B cell (primary cell): ENCODE measurements at regions of chr16 and their contacts with region 1.

Region 1: DNA sequence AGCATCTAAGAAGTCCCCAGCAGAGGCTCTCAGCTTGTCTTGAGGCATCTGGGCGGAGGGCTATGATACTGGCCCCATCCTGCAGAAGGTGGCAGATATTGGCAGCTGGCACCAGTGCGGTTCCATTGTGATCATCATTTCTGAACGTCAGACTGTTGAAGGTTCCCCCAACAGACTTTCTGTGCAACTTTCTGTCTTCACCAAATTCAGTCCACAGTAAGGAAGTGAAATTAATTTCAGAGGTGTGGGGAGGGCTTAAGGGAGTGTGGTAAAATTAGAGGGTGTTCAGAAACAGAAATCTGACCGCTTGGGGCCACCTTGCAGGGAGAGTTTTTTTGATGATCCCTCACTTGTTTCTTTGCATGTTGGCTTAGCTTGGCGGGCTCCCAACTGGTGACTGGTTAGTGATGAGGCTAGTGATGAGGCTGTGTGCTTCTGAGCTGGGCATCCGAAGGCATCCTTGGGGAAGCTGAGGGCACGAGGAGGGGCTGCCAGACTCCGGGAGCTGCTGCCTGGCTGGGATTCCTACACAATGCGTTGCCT is at the start of gene CIITA:
- DNase-seq: peak; percentile 93
- ATAC-seq: peak; percentile 70
- H3K4me3 ChIP-seq: peak within 1 kb of the TSS; percentile 77 to 97 (median 91)
- H3K4me3 Mint-ChIP-seq: peak within 1 kb of the TSS; percentile 100
- H3K27ac ChIP-seq: peak within 1 kb of the TSS; percentile 86 to 88
- H3K27ac Mint-ChIP-seq: peak within 1 kb of the TSS; percentile 92
- H3K4me1 ChIP-seq: peaks cover 57 to 73% of the 10 kb centered on the region in 2 donors
- H3K4me1 Mint-ChIP-seq: peaks cover 61% of the 10 kb centered on the region
- H3K27me3 ChIP-seq: no peaks in the 10 kb centered on the region
- H3K27me3 Mint-ChIP-seq: no peaks in the 10 kb centered on the region
- CTCF ChIP-seq: no peak
- total RNA-seq, gene CIITA: 719 and 738 TPM in 2 replicates

Region 2: GRCh38 chr16:10521681-10522274 is 355.1 kb before region 1 on chr16:
- CTCF ChIA-PET with region 1: no interaction called
- POLR2A ChIA-PET with region 1: interaction called, 11 read pairs
- intact Hi-C with region 1: no loop called
- DNase-seq: peak; percentile 72
- ATAC-seq: peak; percentile 80
- H3K4me3 ChIP-seq: no peak overlapping the region
- H3K4me3 Mint-ChIP-seq: no peak overlapping the region
- H3K27ac ChIP-seq: no peak overlapping the region
- H3K27ac Mint-ChIP-seq: no peak overlapping the region
- H3K4me1 ChIP-seq: peaks cover 0 to 3% of the 10 kb centered on the region in 2 donors
- H3K4me1 Mint-ChIP-seq: peaks cover 2% of the 10 kb centered on the region
- H3K27me3 ChIP-seq: no peaks in the 10 kb centered on the region
- H3K27me3 Mint-ChIP-seq: no peaks in the 10 kb centered on the region
- CTCF ChIP-seq: peak; percentile 93

Region 3: GRCh38 chr16:10752843-10753523 is 123.9 kb before region 1 on chr16:
- CTCF ChIA-PET with region 1: interaction called, 12 read pairs
- POLR2A ChIA-PET with region 1: interaction called, 20 read pairs
- intact Hi-C with region 1: no loop called
- DNase-seq: peak; percentile 86
- ATAC-seq: peak; percentile 82
- H3K4me3 ChIP-seq: peak overlapping the region in 1 of 5 experiments; percentile 20
- H3K4me3 Mint-ChIP-seq: peak overlapping the region; percentile 54
- H3K27ac ChIP-seq: peak overlapping the region; percentile 75 to 76
- H3K27ac Mint-ChIP-seq: peak overlapping the region; percentile 73
- H3K4me1 ChIP-seq: peaks cover 19 to 41% of the 10 kb centered on the region in 2 donors
- H3K4me1 Mint-ChIP-seq: peaks cover 52% of the 10 kb centered on the region
- H3K27me3 ChIP-seq: no peaks in the 10 kb centered on the region
- H3K27me3 Mint-ChIP-seq: no peaks in the 10 kb centered on the region
- CTCF ChIP-seq: no peak

Region 4: DNA sequence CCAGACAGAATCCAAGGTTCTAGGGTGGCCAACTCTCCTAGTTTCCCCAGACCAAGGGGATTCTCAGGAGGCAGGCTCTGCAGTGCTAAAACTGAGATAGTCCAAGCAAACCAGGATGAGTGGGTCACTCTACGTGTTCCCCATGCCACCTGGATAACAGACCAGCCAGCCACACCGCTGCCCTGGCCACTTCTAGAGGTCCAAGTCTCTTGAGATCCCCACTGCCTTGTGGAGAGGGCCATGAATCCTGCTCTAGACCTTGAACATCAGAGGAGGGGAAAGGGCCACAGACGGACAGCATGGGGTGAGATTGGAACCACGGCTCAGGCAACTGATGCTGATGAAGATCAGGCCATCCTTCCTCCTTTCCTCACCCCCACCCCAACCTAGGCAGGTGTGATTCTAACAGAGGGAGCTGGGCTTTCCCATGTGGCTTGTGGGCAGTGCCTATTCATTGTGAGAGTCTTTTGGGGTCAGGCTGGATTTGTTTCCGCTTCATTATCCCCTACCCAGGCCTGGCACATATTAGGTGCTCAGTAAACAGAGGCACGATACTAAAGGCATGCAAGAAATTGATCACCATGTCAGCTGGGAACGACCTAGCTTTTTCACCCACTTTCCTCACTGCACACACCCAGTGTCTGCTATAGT is 41.5 kb before region 1 on chr16:
- CTCF ChIA-PET with region 1: no interaction called
- POLR2A ChIA-PET with region 1: no interaction called
- intact Hi-C with region 1: no loop called
- DNase-seq: no peak
- ATAC-seq: no peak
- H3K4me3 ChIP-seq: no peak overlapping the region
- H3K4me3 Mint-ChIP-seq: no peak overlapping the region
- H3K27ac ChIP-seq: no peak overlapping the region
- H3K27ac Mint-ChIP-seq: peak overlapping the region; percentile 46
- H3K4me1 ChIP-seq: peaks cover 28 to 37% of the 10 kb centered on the region in 2 donors
- H3K4me1 Mint-ChIP-seq: peaks cover 47% of the 10 kb centered on the region
- H3K27me3 ChIP-seq: no peaks in the 10 kb centered on the region
- H3K27me3 Mint-ChIP-seq: no peaks in the 10 kb centered on the region
- CTCF ChIP-seq: no peak

Region 5: GRCh38 chr16:10888320-10888937 is 11.6 kb after region 1 on chr16:
- CTCF ChIA-PET with region 1: interaction called, 120 read pairs
- POLR2A ChIA-PET with region 1: interaction called, 122 read pairs
- intact Hi-C with region 1: loop called (anchors 1 kb)
- DNase-seq: peak; percentile 69
- ATAC-seq: peak; percentile 15
- H3K4me3 ChIP-seq: peak overlapping the region; percentile 41 to 76 (median 47)
- H3K4me3 Mint-ChIP-seq: peak overlapping the region; percentile 81
- H3K27ac ChIP-seq: peak overlapping the region; percentile 74 to 85
- H3K27ac Mint-ChIP-seq: peak overlapping the region; percentile 87
- H3K4me1 ChIP-seq: peaks cover 98 to 100% of the 10 kb centered on the region in 2 donors
- H3K4me1 Mint-ChIP-seq: peaks cover 96% of the 10 kb centered on the region
- H3K27me3 ChIP-seq: no peaks in the 10 kb centered on the region
- H3K27me3 Mint-ChIP-seq: no peaks in the 10 kb centered on the region
- CTCF ChIP-seq: no peak

Region 6: DNA sequence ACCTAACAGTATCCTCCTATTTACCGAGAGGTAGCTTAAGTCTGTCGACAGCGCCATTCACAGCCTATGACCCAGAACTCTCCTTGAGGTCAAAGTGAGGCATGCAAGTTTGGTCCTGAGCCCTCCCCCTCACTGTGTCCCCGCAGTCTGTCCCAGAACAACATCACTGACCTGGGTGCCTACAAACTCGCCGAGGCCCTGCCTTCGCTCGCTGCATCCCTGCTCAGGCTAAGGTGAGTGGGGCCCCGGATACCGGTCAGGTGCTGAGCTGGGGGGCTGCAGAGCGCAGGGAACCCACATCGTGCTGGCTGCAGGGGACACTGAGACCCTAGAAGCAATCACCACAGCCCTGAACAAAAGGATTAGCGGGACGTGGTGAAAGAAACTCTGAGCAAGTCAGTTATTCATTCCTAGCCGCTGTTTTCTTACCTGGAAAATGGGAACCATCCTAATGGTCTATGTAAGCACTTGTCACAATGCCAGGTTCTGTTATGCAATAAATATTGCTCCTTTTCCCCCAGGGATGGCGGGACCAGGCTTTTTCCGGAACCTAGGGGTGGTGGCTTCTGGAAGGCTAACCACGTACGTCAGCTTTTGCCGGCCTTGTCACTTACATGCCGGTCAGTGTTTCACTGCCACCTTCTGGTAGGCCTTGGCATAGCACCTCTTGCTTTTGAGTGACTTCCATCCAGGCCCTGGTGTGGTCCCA is 41.6 kb after region 1 on chr16:
- CTCF ChIA-PET with region 1: interaction called, 98 read pairs
- POLR2A ChIA-PET with region 1: interaction called, 59 read pairs
- intact Hi-C with region 1: loop called (anchors 1 kb)
- DNase-seq: peak; percentile 91
- ATAC-seq: peak; percentile 80
- H3K4me3 ChIP-seq: no peak overlapping the region
- H3K4me3 Mint-ChIP-seq: peak overlapping the region; percentile 44
- H3K27ac ChIP-seq: peak overlapping the region; percentile 51 to 95
- H3K27ac Mint-ChIP-seq: peak overlapping the region; percentile 82
- H3K4me1 ChIP-seq: peaks cover 56 to 63% of the 10 kb centered on the region in 2 donors
- H3K4me1 Mint-ChIP-seq: peaks cover 66% of the 10 kb centered on the region
- H3K27me3 ChIP-seq: no peaks in the 10 kb centered on the region
- H3K27me3 Mint-ChIP-seq: no peaks in the 10 kb centered on the region
- CTCF ChIP-seq: peak; percentile 94

Region 7: GRCh38 chr16:11016993-11017392 is 140.1 kb after region 1 on chr16:
- CTCF ChIA-PET with region 1: no interaction called
- POLR2A ChIA-PET with region 1: no interaction called
- intact Hi-C with region 1: no loop called
- DNase-seq: no peak
- ATAC-seq: no peak
- H3K4me3 ChIP-seq: no peak overlapping the region
- H3K4me3 Mint-ChIP-seq: no peak overlapping the region
- H3K27ac ChIP-seq: no peak overlapping the region
- H3K27ac Mint-ChIP-seq: no peak overlapping the region
- H3K4me1 ChIP-seq: no peaks in the 10 kb centered on the region
- H3K4me1 Mint-ChIP-seq: no peaks in the 10 kb centered on the region
- H3K27me3 ChIP-seq: no peaks in the 10 kb centered on the region
- H3K27me3 Mint-ChIP-seq: no peaks in the 10 kb centered on the region
- CTCF ChIP-seq: no peak

Region 8: DNA sequence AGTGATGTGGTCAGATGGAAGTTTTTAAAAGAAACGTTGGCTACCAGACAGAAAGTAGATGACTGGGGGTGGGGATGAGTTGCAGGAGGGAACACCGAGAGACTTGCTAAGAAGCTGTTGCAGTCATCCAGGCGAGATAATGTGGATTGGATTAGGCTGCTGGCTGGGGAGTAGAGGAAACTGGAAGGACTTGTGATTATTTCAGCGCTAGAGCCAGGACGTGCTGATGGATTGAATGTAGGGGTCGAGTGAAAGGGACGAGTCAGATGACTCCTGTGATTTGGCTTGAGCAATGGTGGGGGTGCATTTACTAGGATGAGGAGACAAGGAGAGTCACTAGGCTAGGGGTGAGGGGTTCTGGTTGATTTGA is 156.0 kb after region 1 on chr16:
- CTCF ChIA-PET with region 1: no interaction called
- POLR2A ChIA-PET with region 1: no interaction called
- intact Hi-C with region 1: no loop called
- DNase-seq: no peak
- ATAC-seq: no peak
- H3K4me3 ChIP-seq: no peak overlapping the region
- H3K4me3 Mint-ChIP-seq: no peak overlapping the region
- H3K27ac ChIP-seq: no peak overlapping the region
- H3K27ac Mint-ChIP-seq: no peak overlapping the region
- H3K4me1 ChIP-seq: no peaks in the 10 kb centered on the region
- H3K4me1 Mint-ChIP-seq: no peaks in the 10 kb centered on the region
- H3K27me3 ChIP-seq: no peaks in the 10 kb centered on the region
- H3K27me3 Mint-ChIP-seq: no peaks in the 10 kb centered on the region
- CTCF ChIP-seq: no peak

Region 9: DNA sequence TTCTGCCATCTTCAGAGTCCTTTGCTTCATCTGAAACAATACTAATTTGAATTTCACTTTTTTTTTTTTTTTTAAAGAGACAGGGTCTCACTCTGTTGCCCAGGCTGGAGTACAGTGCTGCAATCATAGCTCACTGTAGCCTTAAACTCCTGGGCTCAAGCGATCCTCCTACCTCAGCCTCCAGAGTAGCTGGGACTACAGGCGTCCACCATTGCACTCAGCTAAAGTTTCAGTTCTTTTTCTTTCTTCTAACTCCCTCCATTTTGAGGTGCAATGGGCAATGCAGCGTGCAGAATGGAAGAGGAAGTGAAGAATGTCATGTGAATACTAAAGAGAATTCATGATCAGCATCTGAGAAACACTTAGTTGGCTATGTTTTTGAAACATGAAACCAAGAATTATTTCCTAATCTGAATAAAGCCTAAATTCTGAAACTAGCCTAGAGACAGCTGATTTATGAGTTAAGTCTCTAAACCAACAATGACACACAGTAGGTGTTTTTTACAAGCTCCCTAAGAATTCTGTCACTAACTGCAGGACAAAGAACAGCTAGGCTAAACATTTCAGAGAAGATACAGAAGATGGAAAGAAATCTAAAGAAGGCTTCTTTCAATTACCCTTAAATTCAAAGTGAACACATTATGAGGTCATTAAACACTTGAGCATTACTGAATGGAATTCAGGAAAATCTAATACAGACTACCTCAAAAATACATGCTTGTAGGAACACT is 812.3 kb after region 1 on chr16:
- CTCF ChIA-PET with region 1: no interaction called
- POLR2A ChIA-PET with region 1: no interaction called
- intact Hi-C with region 1: loop called (anchors 10 kb)
- DNase-seq: peak; percentile 87
- ATAC-seq: peak; percentile 96
- H3K4me3 ChIP-seq: peak overlapping the region in 1 of 5 experiments; percentile 49
- H3K4me3 Mint-ChIP-seq: peak overlapping the region; percentile 88
- H3K27ac ChIP-seq: peak overlapping the region; percentile 80 to 89
- H3K27ac Mint-ChIP-seq: peak overlapping the region; percentile 98
- H3K4me1 ChIP-seq: peaks cover 70 to 71% of the 10 kb centered on the region in 2 donors
- H3K4me1 Mint-ChIP-seq: peaks cover 76% of the 10 kb centered on the region
- H3K27me3 ChIP-seq: no peaks in the 10 kb centered on the region
- H3K27me3 Mint-ChIP-seq: no peaks in the 10 kb centered on the region
- CTCF ChIP-seq: no peak